GM12878 (cell line): ENCODE measurements at regions of chr3 and their contacts with region 1.

Region 1: GRCh38 chr3:88203642-88204055 is 53.9 kb downstream of the C3orf38 start:
- DNase-seq: peak; percentile 24
- ATAC-seq: peak; percentile 98
- H3K4me3 ChIP-seq: no peak overlapping the region
- H3K27ac ChIP-seq: no peak overlapping the region
- H3K4me1 ChIP-seq: no peaks in the 10 kb centered on the region
- H3K27me3 ChIP-seq: no peaks in the 10 kb centered on the region
- CTCF ChIP-seq: peak; percentile 84 to 85 (median 84)
- EP300 ChIP-seq: no peak
- POLR2A ChIP-seq: no peak
- RAD21 ChIP-seq: peak; percentile 90

Region 2: DNA sequence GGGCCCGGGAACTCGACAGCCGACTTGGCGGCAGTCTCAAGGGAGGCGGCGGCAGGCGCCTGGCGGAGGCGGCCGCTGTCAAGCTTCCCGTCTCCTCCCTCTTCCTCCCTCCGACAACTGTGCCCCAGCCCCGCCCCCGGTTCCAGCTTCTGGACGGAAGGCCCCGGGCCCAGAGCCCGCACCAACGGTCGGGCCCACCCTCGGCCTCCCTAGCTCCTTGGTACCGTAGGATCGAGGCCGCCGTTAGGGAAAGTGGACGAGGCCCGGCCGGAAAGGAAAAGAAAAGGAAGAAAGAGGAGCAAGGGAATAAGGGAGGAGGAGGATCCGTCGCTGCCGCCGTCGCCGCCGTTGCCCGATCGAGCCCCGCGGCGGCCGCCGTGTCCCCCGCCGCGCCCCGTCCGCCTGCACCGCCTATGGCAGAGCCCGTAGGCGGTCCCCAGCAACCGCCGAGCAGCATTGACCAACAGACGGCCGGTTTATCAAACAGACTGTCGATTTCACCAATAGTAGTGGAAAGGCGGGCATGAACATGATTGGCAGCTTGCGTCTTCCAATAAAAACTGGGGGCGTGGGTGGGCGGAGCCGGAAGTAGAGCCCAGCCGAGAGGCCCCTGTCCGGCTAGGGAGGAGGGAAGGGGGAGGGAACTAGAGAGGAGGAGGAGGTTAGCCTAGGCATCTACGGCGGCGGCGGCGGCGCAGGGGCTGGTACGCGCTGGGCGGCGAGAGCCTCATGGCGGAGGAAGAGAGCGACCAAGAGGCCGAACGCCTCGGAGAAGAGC is 144.9 kb before region 1 on chr3 and contains the starts of genes CGGBP1 and ZNF654:
- CTCF ChIA-PET with region 1: no interaction called
- POLR2A ChIA-PET with region 1: no interaction called
- RAD21 ChIA-PET with region 1: no interaction called
- SMC1A ChIA-PET with region 1: no interaction called
- in situ Hi-C with region 1: no loop called
- intact Hi-C with region 1: no loop called
- DNase-seq: peak; percentile 95
- ATAC-seq: peak; percentile 93
- H3K4me3 ChIP-seq: peak within 1 kb of the TSS; percentile 94
- H3K27ac ChIP-seq: peak within 1 kb of the TSS; percentile 86
- H3K4me1 ChIP-seq: peaks cover 2% of the 10 kb centered on the region; the same call in 1 of the 2 replicates
- H3K27me3 ChIP-seq: no peaks in the 10 kb centered on the region
- CTCF ChIP-seq: no peak
- EP300 ChIP-seq: no peak
- POLR2A ChIP-seq: peak; percentile 85
- RAD21 ChIP-seq: no peak
- polyA plus RNA-seq, gene CGGBP1: 27.8 to 30.0 TPM
- polyA plus RNA-seq, gene ZNF654: 2.7 to 2.8 TPM

Region 3: DNA sequence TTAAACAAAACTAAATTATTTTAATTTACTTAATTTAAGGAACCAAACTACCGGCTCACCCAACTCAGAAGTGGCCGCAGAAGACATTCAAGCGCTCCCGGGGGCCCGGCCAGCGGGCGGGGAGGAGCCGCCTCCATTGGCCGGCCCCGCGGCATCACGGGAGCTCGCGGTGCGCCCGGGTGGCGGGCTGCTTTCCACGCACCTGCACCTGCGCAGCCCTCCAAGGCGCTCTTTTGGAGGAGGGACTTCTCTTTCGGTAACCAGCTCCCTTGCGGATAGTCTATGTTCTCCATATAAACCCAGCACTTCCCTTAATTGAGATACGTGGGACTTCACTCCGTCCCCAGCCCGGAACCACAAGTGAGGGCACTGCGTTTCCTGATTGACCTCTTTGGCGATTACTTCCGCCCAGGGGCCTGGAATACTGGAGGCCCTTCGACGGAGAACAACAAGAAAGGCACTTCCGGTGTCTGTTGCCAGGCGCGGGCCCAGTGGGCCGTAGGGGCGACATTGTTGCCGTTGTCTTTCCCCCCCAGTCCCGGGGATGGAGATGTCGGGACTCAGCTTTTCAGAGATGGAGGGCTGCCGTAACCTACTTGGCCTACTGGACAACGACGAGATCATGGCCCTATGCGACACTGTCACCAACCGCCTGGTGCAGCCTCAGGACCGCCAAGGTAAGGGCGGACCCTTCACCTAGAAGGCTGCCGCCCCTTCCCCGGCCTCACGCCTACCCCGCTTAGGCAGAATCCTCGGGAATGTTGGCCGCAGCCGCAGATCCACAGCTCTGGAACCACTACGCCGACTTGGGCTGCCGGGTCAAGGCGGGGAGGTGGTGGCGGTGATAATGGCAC is 53.9 kb before region 1 on chr3 and contains the start of gene C3orf38:
- CTCF ChIA-PET with region 1: no interaction called
- POLR2A ChIA-PET with region 1: no interaction called
- RAD21 ChIA-PET with region 1: no interaction called
- SMC1A ChIA-PET with region 1: no interaction called
- in situ Hi-C with region 1: no loop called
- intact Hi-C with region 1: no loop called
- DNase-seq: peak; percentile 64
- ATAC-seq: peak; percentile 88
- H3K4me3 ChIP-seq: peak within 1 kb of the TSS; percentile 77
- H3K27ac ChIP-seq: peak within 1 kb of the TSS; percentile 96
- H3K4me1 ChIP-seq: no peaks in the 10 kb centered on the region; the same call in 1 of the 2 replicates
- H3K27me3 ChIP-seq: no peaks in the 10 kb centered on the region
- CTCF ChIP-seq: no peak
- EP300 ChIP-seq: no peak
- POLR2A ChIP-seq: peak; percentile 82
- RAD21 ChIP-seq: no peak
- polyA plus RNA-seq, gene C3orf38: 29.1 to 37.7 TPM

Region 4: GRCh38 chr3:88219138-88219792 is 15.6 kb after region 1 on chr3:
- CTCF ChIA-PET with region 1: interaction called, 10 read pairs
- POLR2A ChIA-PET with region 1: no interaction called
- RAD21 ChIA-PET with region 1: no interaction called
- SMC1A ChIA-PET with region 1: interaction called, 7 read pairs
- in situ Hi-C with region 1: no loop called
- intact Hi-C with region 1: no loop called
- DNase-seq: no peak
- ATAC-seq: peak; percentile 92
- H3K4me3 ChIP-seq: no peak overlapping the region
- H3K27ac ChIP-seq: no peak overlapping the region
- H3K4me1 ChIP-seq: no peaks in the 10 kb centered on the region
- H3K27me3 ChIP-seq: no peaks in the 10 kb centered on the region
- CTCF ChIP-seq: peak; percentile 50 to 65 (median 55)
- EP300 ChIP-seq: no peak
- POLR2A ChIP-seq: no peak
- RAD21 ChIP-seq: peak; percentile 87

Region 5: DNA sequence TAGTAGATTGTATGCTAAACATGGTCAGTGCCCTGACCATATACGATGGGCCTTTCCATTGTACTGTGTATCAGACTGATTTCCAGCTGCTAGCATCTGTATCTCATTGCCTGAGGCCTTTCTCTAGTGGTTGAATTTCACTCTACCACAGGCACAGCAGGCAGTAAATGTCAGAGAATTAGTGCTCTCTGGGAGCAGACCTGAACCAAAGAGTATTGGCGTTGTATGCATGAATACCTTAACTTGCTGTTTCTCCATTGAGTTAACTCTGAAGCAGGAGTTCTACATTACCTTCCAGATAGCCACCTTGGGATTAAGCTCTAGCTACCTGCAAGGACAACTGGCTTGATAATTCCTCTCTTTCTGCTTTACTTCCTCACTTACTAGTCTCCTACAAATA is 464.5 kb after region 1 on chr3:
- CTCF ChIA-PET with region 1: no interaction called
- POLR2A ChIA-PET with region 1: no interaction called
- RAD21 ChIA-PET with region 1: no interaction called
- SMC1A ChIA-PET with region 1: no interaction called
- in situ Hi-C with region 1: no loop called
- intact Hi-C with region 1: no loop called
- DNase-seq: no peak
- ATAC-seq: no peak
- H3K4me3 ChIP-seq: no peak overlapping the region
- H3K27ac ChIP-seq: no peak overlapping the region
- H3K4me1 ChIP-seq: no peaks in the 10 kb centered on the region
- H3K27me3 ChIP-seq: no peaks in the 10 kb centered on the region
- CTCF ChIP-seq: no peak
- EP300 ChIP-seq: no peak
- POLR2A ChIP-seq: no peak
- RAD21 ChIP-seq: no peak

Region 6: GRCh38 chr3:89098964-89099585 is 895.4 kb after region 1 on chr3:
- CTCF ChIA-PET with region 1: interaction called, 3 read pairs
- POLR2A ChIA-PET with region 1: no interaction called
- RAD21 ChIA-PET with region 1: no interaction called
- SMC1A ChIA-PET with region 1: no interaction called
- in situ Hi-C with region 1: loop called (anchors 5 kb)
- intact Hi-C with region 1: loop called (anchors 2 kb)
- DNase-seq: no peak
- ATAC-seq: peak; percentile 92
- H3K4me3 ChIP-seq: no peak overlapping the region
- H3K27ac ChIP-seq: no peak overlapping the region
- H3K4me1 ChIP-seq: no peaks in the 10 kb centered on the region
- H3K27me3 ChIP-seq: no peaks in the 10 kb centered on the region
- CTCF ChIP-seq: peak; percentile 84 to 91 (median 89)
- EP300 ChIP-seq: no peak
- POLR2A ChIP-seq: no peak
- RAD21 ChIP-seq: peak; percentile 75

Region 7: DNA sequence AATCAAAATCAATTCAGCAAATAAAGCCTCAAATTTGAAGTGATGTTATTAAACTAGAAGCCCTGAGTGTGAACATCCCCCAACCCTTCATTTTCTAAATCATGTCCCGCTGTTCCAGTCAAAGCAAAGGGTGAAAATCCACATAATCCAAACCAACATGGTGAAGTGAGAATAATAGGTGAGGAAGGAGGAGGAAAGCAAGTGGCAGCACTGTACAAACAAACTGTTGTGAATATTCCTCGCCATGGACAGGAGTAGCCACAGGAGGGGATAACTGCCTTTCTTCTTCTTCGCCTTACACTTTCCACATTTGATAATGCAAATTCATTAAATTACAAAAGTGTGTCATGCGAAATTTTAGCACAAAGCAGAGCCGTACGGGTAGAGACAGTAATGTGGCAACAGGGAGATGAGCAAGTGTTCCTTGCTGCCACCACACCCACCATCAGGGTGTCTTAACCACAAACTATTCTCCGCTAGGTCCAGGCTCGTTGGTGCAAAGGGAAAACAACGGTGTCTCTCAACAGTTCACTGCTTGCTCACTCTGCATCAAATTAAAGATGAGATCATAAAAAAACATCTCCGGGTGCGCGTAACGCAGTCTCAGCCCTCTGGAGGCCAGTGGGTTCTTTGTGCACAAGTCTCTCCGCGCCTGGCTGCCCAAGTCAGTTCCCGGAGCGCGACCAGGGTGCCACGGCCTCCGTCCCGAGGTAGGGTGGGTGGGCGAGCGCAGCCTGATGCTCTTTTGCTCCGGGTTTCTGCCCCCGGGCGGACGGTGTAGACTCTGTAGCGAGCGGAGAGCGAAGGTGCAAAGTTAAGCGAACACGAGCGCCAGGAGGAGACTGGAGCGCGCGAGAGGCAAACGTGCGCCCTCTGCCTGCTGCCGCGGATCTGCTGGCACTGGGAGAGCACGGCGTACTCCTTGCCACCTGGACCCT is 910.5 kb after region 1 on chr3:
- CTCF ChIA-PET with region 1: interaction called, 3 read pairs
- POLR2A ChIA-PET with region 1: no interaction called
- RAD21 ChIA-PET with region 1: no interaction called
- SMC1A ChIA-PET with region 1: no interaction called
- in situ Hi-C with region 1: no loop called
- intact Hi-C with region 1: loop called (anchors 5 kb)
- DNase-seq: no peak
- ATAC-seq: peak; percentile 99
- H3K4me3 ChIP-seq: no peak overlapping the region
- H3K27ac ChIP-seq: no peak overlapping the region
- H3K4me1 ChIP-seq: no peaks in the 10 kb centered on the region
- H3K27me3 ChIP-seq: peaks cover 0 to 2% of the 10 kb centered on the region in 2 experiments; a peak in 1 of 4 replicates
- CTCF ChIP-seq: peak; percentile 47 to 72 (median 64); a peak in 5 of 6 replicates
- EP300 ChIP-seq: no peak
- POLR2A ChIP-seq: no peak
- RAD21 ChIP-seq: peak; percentile 32

Region 8: DNA sequence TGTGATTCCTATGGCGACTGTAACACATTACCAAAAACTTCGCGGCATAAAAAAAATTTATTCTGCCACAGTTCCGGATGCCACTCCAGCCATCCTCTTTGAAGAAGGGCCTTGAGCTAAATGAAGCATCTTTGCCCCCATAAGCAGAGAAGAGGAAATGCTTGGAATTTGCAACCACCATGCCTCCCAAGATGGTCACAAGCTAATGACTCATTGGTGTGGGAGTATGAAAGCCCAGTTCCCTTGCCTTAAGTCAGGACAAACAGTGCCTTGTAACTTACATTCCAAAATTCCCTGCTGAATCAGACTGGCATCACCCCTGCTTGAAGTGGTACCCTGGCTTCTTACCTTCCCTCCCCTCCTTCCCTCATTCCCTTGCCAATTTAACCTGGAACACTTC is 1981.2 kb after region 1 on chr3:
- CTCF ChIA-PET with region 1: interaction called, 6 read pairs
- POLR2A ChIA-PET with region 1: no interaction called
- RAD21 ChIA-PET with region 1: interaction called, 4 read pairs
- SMC1A ChIA-PET with region 1: interaction called, 5 read pairs
- in situ Hi-C with region 1: loop called (anchors 10 kb)
- intact Hi-C with region 1: loop called (anchors 5 kb)
- DNase-seq: no peak
- ATAC-seq: no peak
- H3K4me3 ChIP-seq: no peak overlapping the region
- H3K27ac ChIP-seq: no peak overlapping the region
- H3K4me1 ChIP-seq: no peaks in the 10 kb centered on the region
- H3K27me3 ChIP-seq: no peaks in the 10 kb centered on the region
- CTCF ChIP-seq: no peak
- EP300 ChIP-seq: no peak
- POLR2A ChIP-seq: no peak
- RAD21 ChIP-seq: no peak